Mucosa of descending colon (tissue), 3 donors: ENCODE measurements at regions of chr1 and their contacts with region 1.

Region 1: GRCh38 chr1:107750358-107750959 is 214.5 kb downstream of the VAV3 start:
- DNase-seq: peak in 2 of 3 donors; percentile 69 to 94
- ATAC-seq: peak; percentile 92
- H3K4me3 ChIP-seq: no peak overlapping the region
- H3K4me1 ChIP-seq: no peaks in the 10 kb centered on the region
- CTCF ChIP-seq: no peak

Region 2: GRCh38 chr1:107277022-107277421 is 473.4 kb before region 1 on chr1:
- intact Hi-C with region 1: loop called (anchors 5 to 10 kb)
- DNase-seq: peak in 1 of 3 donors; percentile 71
- ATAC-seq: peak; percentile 59
- H3K4me3 ChIP-seq: no peak overlapping the region
- H3K4me1 ChIP-seq: no peaks in the 10 kb centered on the region
- CTCF ChIP-seq: no peak

Region 3: GRCh38 chr1:107430540-107431228 is 319.8 kb before region 1 on chr1:
- intact Hi-C with region 1: loop called in 1 of 2 experiments (anchors 5 kb)
- DNase-seq: peak in 1 of 3 donors; percentile 75
- ATAC-seq: peak; percentile 86
- H3K4me3 ChIP-seq: no peak overlapping the region
- H3K4me1 ChIP-seq: no peaks in the 10 kb centered on the region
- CTCF ChIP-seq: peak; percentile 50

Region 4: DNA sequence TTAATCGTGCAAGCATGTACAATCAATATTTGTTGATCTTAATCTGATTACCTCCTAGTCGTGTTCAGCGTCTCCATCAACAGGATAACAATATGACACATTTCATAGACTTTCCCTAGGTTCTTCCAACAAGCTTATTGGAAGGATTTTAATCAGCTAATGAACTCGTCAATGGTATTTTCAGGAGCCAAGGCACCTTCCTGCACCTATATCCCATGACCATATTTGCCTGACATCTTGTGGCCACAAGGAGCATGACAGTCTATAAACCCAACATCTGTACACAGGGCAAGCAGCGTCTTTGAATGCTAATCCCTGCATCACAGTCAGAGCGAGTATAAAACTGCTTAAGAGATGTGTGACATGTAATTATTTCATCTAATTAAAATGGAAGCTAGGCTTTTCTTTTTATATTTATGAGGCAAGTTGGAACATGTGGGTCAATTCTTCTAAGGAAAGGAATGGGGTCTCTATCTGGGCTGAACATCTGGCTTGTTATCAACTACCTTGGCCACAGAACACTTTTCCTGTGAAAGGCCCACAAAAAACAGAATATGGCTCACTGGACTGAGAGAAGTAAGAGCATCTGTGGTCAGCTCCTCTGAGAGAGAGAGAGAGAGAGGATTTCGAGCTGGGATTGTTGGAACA is 220.8 kb before region 1 on chr1:
- intact Hi-C with region 1: loop called in 1 of 2 experiments (anchors 10 kb)
- DNase-seq: peak in 1 of 3 donors; percentile 50
- ATAC-seq: peak; percentile 84
- H3K4me3 ChIP-seq: no peak overlapping the region
- H3K4me1 ChIP-seq: peaks cover 3% of the 10 kb centered on the region
- CTCF ChIP-seq: no peak

Region 5: DNA sequence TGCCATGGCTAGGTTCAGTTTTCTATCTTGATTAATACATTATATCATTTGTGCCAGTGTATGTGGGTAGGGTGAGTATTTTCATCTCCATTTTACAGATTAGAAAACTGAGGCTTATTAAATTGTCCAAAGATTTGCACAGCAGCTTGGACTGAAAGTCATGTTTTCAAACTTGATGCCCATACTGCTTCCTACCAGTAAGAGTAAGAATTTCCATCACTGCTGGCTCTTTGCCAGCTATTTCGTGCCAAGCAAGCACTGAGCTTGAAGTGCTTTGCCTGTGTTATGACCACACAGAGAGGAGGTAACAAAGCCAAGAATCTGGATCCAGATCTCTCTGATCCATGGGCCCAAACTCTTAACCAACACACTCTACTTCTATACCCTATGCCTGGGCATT is 80.5 kb before region 1 on chr1:
- intact Hi-C with region 1: no loop called
- DNase-seq: peak in 2 of 3 donors; percentile 71 to 81
- ATAC-seq: peak; percentile 56
- H3K4me3 ChIP-seq: no peak overlapping the region
- H3K4me1 ChIP-seq: peaks cover 33% of the 10 kb centered on the region
- CTCF ChIP-seq: no peak